Astrocyte of the cerebellum (primary cell): ENCODE measurements at regions of chr16 and their contacts with region 1.

Region 1: GRCh38 chr16:75108792-75109734 is 7.5 kb downstream of the LDHD start:
- DNase-seq: peak; percentile 83
- H3K4me3 ChIP-seq: no peak overlapping the region
- CTCF ChIP-seq: no peak

Region 2: GRCh38 chr16:75007443-75007842 is 101.6 kb before region 1 on chr16:
- in situ Hi-C with region 1: loop called (anchors 5 kb)
- DNase-seq: no peak
- H3K4me3 ChIP-seq: no peak overlapping the region
- CTCF ChIP-seq: no peak

Region 3: DNA sequence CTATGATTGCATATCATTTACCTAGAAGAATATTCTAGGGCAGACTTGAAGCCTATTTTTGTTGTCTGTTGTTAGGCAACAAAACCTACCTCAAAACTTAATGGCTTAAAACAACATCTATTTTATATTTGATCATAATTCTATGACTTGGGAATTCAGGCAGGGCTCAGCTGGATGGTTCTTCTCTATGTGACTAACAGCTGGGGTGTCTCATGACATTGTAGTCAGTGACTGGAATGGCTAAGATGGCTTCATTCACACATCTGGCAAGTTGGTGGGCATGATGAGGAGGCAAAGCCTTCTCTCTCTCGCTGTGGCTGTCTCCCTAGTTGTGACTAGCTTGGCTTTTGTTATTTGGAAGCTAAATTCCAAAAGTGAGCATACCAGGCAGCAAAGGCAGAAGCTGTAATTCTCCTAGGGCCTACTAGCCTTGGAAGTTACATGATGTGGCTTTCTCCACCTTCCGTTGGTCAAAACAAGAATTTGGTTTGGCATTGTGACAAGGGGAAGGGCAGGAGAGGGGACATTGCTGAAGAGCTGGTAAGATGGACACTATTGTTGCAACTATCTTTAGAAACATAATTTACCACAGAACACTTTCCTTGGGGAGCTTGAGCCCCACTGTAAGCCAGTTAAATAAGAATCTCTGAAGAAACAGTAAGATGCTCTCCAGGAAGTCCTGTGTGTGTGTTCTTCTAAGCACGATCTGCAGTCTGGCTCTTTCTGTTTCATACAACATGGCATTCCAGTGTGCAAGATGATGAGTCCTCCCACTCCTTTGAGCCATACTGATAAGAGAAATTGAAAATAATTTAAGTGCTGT is 70.8 kb before region 1 on chr16:
- in situ Hi-C with region 1: loop called (anchors 5 kb)
- DNase-seq: no peak
- H3K4me3 ChIP-seq: no peak overlapping the region
- CTCF ChIP-seq: no peak

Region 4: DNA sequence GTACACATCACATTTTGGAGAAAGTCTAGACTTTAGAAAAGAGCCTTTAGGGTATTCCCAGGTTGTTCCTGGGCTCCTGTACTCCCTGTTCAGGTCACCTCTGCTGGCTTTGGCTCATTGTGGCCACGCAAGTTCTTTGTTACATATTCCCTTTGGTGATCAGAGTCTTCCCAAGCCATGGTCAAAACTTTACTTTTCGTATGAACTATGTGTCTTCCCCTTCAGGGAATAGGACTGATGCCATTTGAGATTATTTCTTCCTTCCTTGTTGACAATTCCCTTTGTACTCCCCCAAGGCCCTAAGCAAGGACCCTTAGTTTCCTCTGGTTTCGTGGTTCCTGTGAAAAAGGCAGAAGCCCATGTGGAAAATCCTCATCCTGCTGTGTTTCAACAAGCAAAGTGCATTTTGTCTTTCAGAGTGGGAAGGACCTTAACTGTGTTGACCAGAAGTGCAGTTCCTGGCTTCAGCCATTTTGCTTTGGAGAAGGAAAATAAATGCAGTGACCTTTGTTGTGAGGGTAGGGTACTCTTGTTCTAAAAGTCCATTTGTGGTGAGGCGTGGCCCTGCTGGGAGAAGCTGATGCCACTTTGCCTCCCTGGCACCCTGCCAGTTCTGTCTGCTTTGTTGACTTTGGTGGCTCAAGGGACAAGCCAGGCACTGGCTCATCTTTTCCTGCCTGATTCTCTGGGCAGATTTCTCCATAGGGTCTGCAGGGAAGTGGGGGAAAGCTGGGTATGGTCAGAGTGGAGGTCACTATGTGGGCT is 55.1 kb before region 1 on chr16:
- in situ Hi-C with region 1: no loop called
- DNase-seq: no peak
- H3K4me3 ChIP-seq: no peak overlapping the region
- CTCF ChIP-seq: no peak